ENCODE measurements at regions of chr11 and their contacts with region 1.

Region 1: DNA sequence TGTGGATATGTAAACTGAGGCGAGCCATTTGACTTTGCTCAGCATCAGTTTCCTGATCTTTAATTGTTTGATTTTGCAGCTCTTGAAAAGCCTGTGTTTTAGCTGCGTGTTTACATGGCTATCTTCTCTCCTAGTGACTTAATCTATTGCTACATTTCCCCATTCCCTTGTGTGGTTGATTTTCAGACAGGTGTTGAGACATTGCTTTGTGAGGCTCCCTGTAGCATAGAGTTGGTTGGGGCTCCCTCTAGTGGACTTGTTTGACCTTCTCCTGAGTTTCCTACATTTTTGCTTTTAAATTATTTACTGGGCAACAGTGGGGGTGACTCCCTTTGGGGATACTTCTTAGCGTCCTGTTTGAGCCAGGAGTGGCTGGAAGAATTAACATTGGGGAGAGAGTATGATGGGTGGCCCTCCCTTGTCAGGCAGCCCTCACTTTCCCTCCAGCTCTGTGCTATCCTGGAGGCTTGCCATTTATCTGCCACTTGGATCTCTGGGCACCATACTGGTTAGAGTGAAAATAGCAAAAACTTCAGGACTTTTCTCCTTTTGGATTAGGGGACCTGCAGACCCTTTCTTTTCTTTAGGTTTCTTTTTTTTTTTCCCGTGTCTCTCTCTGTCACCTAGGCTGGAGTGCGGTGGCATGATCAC is 9.2 kb upstream of the CBL start:
- DNase-seq: no peak
- H3K4me3 ChIP-seq: no peak overlapping the region
- H3K27ac ChIP-seq: no peak overlapping the region
- H3K4me1 ChIP-seq: peaks cover 0 to 7% (median 0%) of the 10 kb centered on the region in 3 donors
- H3K27me3 ChIP-seq: no peaks in the 10 kb centered on the region
- CTCF ChIP-seq: peak; percentile 64 to 87 (median 80)
- POLR2A ChIP-seq: no peak

Region 2: GRCh38 chr11:119095066-119095880 is 101.7 kb before region 1 on chr11:
- intact Hi-C with region 1: loop called (anchors 10 kb)
- DNase-seq: peak; percentile 97
- H3K4me3 ChIP-seq: peak overlapping the region; percentile 73 to 93 (median 86)
- H3K27ac ChIP-seq: peak overlapping the region; percentile 90 to 97 (median 96)
- H3K4me1 ChIP-seq: peaks cover 15 to 46% (median 24%) of the 10 kb centered on the region in 3 donors
- H3K27me3 ChIP-seq: no peaks in the 10 kb centered on the region
- CTCF ChIP-seq: peak in 2 of 6 experiments; percentile 3 to 24
- POLR2A ChIP-seq: peak in 2 of 4 donors; percentile 98 to 99

Measured in esophagus squamous epithelium (tissue), 5 donors.